RWPE1 (cell line): ENCODE measurements at regions of chr1 and their contacts with region 1.

Region 1: GRCh38 chr1:201254625-201255506 is 28.4 kb upstream of the PKP1 start:
- DNase-seq: peak; percentile 91
- H3K27ac ChIP-seq: peak overlapping the region; percentile 69
- CTCF ChIP-seq: peak; percentile 97

Region 2: GRCh38 chr1:201266774-201267173 is 11.9 kb after region 1 on chr1:
- CTCF ChIA-PET with region 1: interaction called, 17 read pairs
- POLR2A ChIA-PET with region 1: no interaction called
- DNase-seq: peak; percentile 95
- H3K27ac ChIP-seq: no peak overlapping the region
- CTCF ChIP-seq: no peak

Region 3: GRCh38 chr1:201288766-201289165 is 33.9 kb after region 1 on chr1:
- CTCF ChIA-PET with region 1: interaction called, 45 read pairs
- POLR2A ChIA-PET with region 1: interaction called, 109 read pairs
- DNase-seq: peak; percentile 68
- H3K27ac ChIP-seq: peak overlapping the region; percentile 97
- CTCF ChIP-seq: no peak

Region 4: DNA sequence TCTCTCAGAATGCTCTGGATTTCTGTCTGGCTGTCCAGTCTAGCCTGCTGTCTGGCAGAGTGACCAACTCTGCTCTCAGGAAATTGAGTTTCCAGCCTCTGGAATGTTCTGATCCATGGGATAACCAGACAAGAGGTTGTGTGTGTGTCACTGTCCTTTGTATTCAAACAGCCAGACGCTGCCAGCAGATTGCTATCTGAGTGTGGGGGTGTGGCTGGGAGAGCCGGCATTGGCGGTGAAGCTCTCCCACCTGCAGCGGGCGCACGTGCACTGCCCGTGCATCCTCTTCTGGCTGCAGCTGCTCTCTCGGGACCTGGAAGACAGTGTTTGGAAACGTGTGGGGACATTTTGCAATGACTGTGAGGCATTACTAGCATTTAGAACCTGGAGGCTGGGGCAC is 54.6 kb after region 1 on chr1:
- CTCF ChIA-PET with region 1: interaction called, 46 read pairs
- POLR2A ChIA-PET with region 1: interaction called, 4 read pairs
- DNase-seq: peak; percentile 83
- H3K27ac ChIP-seq: peak overlapping the region; percentile 100
- CTCF ChIP-seq: no peak; the same call in 1 of the 2 replicates

Region 5: GRCh38 chr1:201330541-201330940 is 75.7 kb after region 1 on chr1:
- CTCF ChIA-PET with region 1: interaction called, 11 read pairs
- POLR2A ChIA-PET with region 1: no interaction called
- DNase-seq: no peak
- H3K27ac ChIP-seq: peak overlapping the region; percentile 68
- CTCF ChIP-seq: no peak

Region 6: GRCh38 chr1:201353150-201353801 is 98.4 kb after region 1 on chr1:
- CTCF ChIA-PET with region 1: interaction called, 33 read pairs
- POLR2A ChIA-PET with region 1: no interaction called
- DNase-seq: peak; percentile 64
- H3K27ac ChIP-seq: peak overlapping the region; percentile 53
- CTCF ChIP-seq: no peak